ENCODE measurements at regions of chr1 and their contacts with region 1.

Region 1: GRCh38 chr1:42777852-42778251 is 6.9 kb upstream of the TMEM269 start:
- DNase-seq: peak; percentile 75
- H3K4me3 ChIP-seq: no peak overlapping the region
- H3K27ac ChIP-seq: no peak overlapping the region
- H3K4me1 ChIP-seq: no peaks in the 10 kb centered on the region
- H3K27me3 ChIP-seq: no peaks in the 10 kb centered on the region
- CTCF ChIP-seq: peak; percentile 73
- EP300 ChIP-seq: no peak
- RAD21 ChIP-seq: peak; percentile 89

Region 2: DNA sequence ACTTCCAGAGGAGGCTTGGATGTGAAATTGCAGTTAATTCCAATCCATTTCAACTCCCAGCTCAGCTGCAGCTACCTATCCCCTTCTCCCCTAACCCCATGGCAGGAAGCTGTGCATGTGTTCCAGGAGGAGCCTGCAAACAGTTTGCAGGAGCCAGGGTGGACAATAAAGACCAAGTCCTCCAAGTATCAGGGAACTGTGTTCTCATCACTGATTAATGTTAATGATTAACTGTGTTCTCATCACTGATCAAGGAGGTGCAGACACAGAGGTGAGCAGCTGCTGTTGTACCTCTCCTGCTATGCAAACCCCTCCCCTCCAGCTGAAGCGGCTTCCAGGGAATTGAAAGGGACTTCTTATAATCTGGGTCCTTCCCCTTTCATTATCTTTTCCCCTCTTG is 57.0 kb before region 1 on chr1:
- CTCF ChIA-PET with region 1: no interaction called
- POLR2A ChIA-PET with region 1: no interaction called
- DNase-seq: no peak
- H3K4me3 ChIP-seq: no peak overlapping the region
- H3K27ac ChIP-seq: no peak overlapping the region
- H3K4me1 ChIP-seq: no peaks in the 10 kb centered on the region
- H3K27me3 ChIP-seq: no peaks in the 10 kb centered on the region
- CTCF ChIP-seq: no peak
- EP300 ChIP-seq: no peak
- RAD21 ChIP-seq: no peak

Region 3: GRCh38 chr1:42766741-42767509 is 10.9 kb before region 1 on chr1 and contains the starts of genes C1orf50 and P3H1:
- CTCF ChIA-PET with region 1: interaction called, 31 read pairs
- POLR2A ChIA-PET with region 1: interaction called, 7 read pairs
- DNase-seq: peak; percentile 97
- H3K4me3 ChIP-seq: peak within 1 kb of the TSS; percentile 77 to 91
- H3K27ac ChIP-seq: peak within 1 kb of the TSS; percentile 75 to 84
- H3K4me1 ChIP-seq: peaks cover 4 to 12% of the 10 kb centered on the region in 2 experiments; a peak in 2 of 4 replicates
- H3K27me3 ChIP-seq: no peaks in the 10 kb centered on the region
- CTCF ChIP-seq: no peak
- EP300 ChIP-seq: no peak
- RAD21 ChIP-seq: no peak
- polyA plus RNA-seq, gene C1orf50: 2.6 and 3.6 TPM in 2 replicates
- polyA plus RNA-seq, gene P3H1: 64.3 and 66.8 TPM in 2 replicates

Region 4: GRCh38 chr1:42793824-42794223 is 16.0 kb after region 1 on chr1:
- CTCF ChIA-PET with region 1: interaction called, 24 read pairs
- POLR2A ChIA-PET with region 1: no interaction called
- DNase-seq: no peak
- H3K4me3 ChIP-seq: no peak overlapping the region
- H3K27ac ChIP-seq: no peak overlapping the region
- H3K4me1 ChIP-seq: no peaks in the 10 kb centered on the region; a peak in 1 of 4 replicates
- H3K27me3 ChIP-seq: no peaks in the 10 kb centered on the region
- CTCF ChIP-seq: no peak
- EP300 ChIP-seq: no peak
- RAD21 ChIP-seq: no peak

Region 5: GRCh38 chr1:42807056-42807668 is 29.3 kb after region 1 on chr1:
- CTCF ChIA-PET with region 1: interaction called, 26 read pairs
- POLR2A ChIA-PET with region 1: no interaction called
- DNase-seq: no peak
- H3K4me3 ChIP-seq: no peak overlapping the region
- H3K27ac ChIP-seq: no peak overlapping the region
- H3K4me1 ChIP-seq: peaks cover 0 to 2% of the 10 kb centered on the region in 2 experiments; a peak in 1 of 4 replicates
- H3K27me3 ChIP-seq: no peaks in the 10 kb centered on the region
- CTCF ChIP-seq: no peak
- EP300 ChIP-seq: no peak
- RAD21 ChIP-seq: no peak

Region 6: DNA sequence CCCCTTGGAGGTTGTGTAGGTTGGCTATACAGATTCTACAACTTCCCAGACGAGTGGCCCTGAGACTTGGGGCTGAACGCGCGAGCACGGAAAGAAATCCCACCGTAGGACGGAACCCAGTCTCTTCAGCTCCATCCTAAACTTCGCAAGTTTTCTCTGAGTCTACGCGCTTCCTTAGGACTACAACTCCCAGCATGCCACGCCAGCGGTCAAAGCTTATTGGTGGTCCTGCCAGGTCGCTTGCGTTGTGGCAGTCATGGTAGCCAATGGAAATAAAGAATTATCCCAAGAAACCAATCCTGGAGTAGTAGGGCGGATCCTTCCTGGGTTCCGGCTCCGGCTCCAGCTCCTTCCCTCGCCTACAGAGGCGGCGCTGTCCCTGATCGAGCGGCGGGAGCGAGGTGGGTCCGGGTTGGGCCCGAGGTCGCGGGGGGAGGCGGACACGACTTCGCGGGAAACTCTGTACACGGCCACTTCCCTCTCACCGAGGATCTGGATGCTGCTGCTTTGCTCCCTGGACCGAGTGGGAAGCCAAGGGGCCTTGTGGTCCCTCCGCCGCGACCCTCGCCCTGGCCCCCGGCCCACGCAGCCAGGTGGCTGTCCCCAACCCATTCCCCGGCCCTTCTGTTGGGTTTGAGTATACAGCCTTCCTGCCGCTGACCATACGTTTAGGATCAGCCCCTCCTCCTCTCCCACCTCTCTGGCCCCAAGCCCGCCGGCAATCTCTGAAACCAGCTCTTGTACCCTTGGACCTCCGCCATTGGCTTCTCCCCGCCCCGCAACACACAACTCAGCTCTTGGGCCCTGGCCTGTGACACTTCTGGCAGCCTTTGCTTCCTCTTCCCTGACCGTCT is 68.6 kb after region 1 on chr1 and contains the start of gene ZNF691:
- CTCF ChIA-PET with region 1: interaction called, 10 read pairs
- POLR2A ChIA-PET with region 1: no interaction called
- DNase-seq: peak; percentile 95
- H3K4me3 ChIP-seq: peak within 1 kb of the TSS; percentile 64 to 73
- H3K27ac ChIP-seq: peak within 1 kb of the TSS in 1 of 2 experiments; percentile 62; a peak in 2 of 4 replicates
- H3K4me1 ChIP-seq: peaks cover 0 to 11% of the 10 kb centered on the region in 2 experiments; a peak in 2 of 4 replicates
- H3K27me3 ChIP-seq: no peaks in the 10 kb centered on the region
- CTCF ChIP-seq: peak; percentile 48
- EP300 ChIP-seq: no peak
- RAD21 ChIP-seq: no peak
- polyA plus RNA-seq, gene ZNF691: 7.2 and 10.1 TPM in 2 replicates

Region 7: GRCh38 chr1:42913426-42914091 is 135.7 kb after region 1 on chr1:
- CTCF ChIA-PET with region 1: interaction called, 50 read pairs
- POLR2A ChIA-PET with region 1: no interaction called
- DNase-seq: peak; percentile 67
- H3K4me3 ChIP-seq: no peak overlapping the region
- H3K27ac ChIP-seq: no peak overlapping the region
- H3K4me1 ChIP-seq: no peaks in the 10 kb centered on the region
- H3K27me3 ChIP-seq: no peaks in the 10 kb centered on the region
- CTCF ChIP-seq: peak; percentile 77
- EP300 ChIP-seq: no peak
- RAD21 ChIP-seq: peak; percentile 89

Region 8: DNA sequence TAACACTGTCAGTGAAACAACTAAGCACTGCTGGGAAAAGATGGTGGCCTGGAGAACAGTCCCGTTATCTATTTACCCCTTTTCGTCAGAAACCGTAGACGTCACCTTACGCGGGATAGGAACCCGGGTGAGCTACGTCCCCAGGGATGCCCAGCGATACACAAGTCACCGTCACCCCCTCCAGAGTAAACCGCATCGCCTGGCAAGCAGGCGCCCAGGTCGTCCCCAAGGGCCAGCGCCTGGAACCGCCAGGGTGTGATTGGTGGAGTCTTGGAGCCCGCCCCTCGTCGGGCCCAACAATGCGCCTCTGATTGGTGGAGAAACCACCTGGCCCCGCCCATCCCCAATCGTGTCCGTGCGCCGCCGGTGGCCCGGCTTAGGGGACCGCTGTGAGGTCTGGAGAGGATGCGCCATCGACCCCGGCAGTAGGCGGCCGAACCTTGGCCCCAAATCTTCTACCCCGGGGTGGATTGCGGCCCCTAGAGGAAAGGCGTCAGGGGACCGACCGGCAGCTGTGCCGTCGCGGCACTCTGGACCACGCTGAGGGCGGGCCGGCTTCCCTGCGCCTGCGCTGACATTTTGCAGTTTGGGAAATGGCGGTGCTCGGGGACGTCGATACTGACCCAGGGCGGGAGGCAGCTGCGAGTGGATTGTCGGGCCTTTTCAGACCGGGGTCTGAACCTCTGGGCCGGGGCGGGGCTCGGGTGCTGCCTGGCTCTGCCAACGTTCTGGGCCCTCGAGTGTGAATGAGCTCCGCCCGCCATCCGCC is 146.4 kb after region 1 on chr1:
- CTCF ChIA-PET with region 1: interaction called, 24 read pairs
- POLR2A ChIA-PET with region 1: no interaction called
- DNase-seq: peak; percentile 96
- H3K4me3 ChIP-seq: peak overlapping the region; percentile 66 to 73
- H3K27ac ChIP-seq: peak overlapping the region; percentile 64 to 82
- H3K4me1 ChIP-seq: peaks cover 0 to 11% of the 10 kb centered on the region in 2 experiments; a peak in 3 of 4 replicates
- H3K27me3 ChIP-seq: no peaks in the 10 kb centered on the region
- CTCF ChIP-seq: peak; percentile 29; the same call in 1 of the 2 replicates
- EP300 ChIP-seq: no peak
- RAD21 ChIP-seq: no peak